ENCODE measurements at regions of chr10 and their contacts with region 1.

Region 1: DNA sequence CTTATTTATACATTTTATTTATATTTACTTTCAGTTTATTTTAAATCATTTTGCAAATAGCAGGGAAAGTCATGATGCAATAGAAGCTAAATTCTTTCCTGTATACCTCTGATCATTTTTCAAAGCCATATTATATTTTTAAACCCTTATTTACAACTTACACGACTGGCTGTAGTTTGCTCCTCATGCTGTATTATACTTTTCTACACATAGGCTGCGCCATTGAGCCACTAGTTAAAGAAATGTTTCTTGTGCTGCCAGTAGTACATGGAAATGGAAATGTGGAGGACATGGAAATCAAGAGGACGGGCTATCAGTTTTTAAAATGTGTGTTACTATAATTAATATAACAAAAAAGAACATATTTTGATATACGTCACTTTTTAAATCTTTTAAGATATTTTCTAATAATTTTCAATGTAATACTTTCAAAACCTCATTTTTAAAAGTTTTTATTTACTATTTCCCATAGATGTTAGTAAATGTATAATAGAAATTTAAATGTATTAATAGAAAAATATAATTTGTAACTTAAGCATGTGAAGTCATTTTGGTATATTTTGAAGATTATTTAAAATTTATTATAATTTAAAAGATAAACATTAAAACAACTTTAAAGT is 118.5 kb downstream of the VTI1A start:
- DNase-seq: no peak
- ATAC-seq: no peak
- H3K4me3 Mint-ChIP-seq: no peak overlapping the region
- H3K27ac Mint-ChIP-seq: no peak overlapping the region
- H3K4me1 Mint-ChIP-seq: peaks cover 1% of the 10 kb centered on the region
- H3K27me3 Mint-ChIP-seq: no peaks in the 10 kb centered on the region
- CTCF ChIP-seq: no peak

Region 2: GRCh38 chr10:112732277-112732921 is 166.9 kb after region 1 on chr10:
- CTCF ChIA-PET with region 1: no interaction called
- POLR2A ChIA-PET with region 1: no interaction called
- intact Hi-C with region 1: no loop called
- DNase-seq: no peak
- ATAC-seq: no peak
- H3K4me3 Mint-ChIP-seq: no peak overlapping the region
- H3K27ac Mint-ChIP-seq: no peak overlapping the region
- H3K4me1 Mint-ChIP-seq: peaks cover 5% of the 10 kb centered on the region
- H3K27me3 Mint-ChIP-seq: no peaks in the 10 kb centered on the region
- CTCF ChIP-seq: no peak

Region 3: DNA sequence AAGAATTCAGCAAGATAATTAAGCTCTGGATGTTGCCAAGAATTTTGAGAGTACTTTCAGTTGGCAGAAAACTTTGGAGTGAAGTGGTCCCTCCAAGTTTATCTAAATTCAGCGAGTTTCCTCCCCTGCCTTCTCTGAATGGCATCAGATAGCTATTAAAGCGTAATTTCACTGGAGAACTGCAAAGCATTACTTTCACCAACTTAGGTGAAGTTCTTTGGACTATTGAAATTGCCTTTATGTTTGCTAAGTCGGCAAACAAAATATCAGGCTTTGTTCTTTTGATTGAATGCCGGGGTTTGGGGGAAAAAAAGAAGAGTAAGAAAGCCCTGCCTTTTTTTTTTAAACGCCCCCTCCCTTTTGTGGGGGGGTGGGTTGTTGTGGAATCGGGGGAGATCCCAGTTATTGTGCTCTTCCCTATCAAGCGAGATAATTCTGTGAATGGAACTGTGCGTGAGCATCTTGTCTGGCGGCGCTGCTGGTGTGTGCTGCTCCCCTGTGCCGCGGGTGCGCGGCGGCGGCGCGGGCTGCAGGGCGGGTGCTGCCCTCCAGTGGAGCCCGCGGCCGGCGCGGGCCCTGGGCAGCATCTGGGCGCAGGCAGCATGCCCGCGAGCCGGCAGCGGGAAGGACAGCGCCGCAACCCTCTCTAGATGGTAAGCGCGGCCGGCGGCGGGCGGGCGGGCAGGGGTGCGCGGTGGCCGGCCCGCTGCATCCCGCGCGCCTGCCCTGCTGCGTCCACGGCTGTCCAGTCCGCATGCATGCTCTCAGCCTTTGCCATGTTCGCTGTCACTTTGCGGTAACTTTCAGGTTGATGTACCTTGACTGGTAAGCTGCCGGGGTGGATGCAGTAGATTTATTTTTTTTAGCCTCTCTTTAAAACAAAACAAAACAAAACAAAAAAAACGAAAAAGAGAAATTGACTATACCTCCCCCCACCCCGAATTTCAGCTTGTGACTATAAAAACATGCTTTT is 561.0 kb after region 1 on chr10:
- CTCF ChIA-PET with region 1: no interaction called
- POLR2A ChIA-PET with region 1: no interaction called
- intact Hi-C with region 1: loop called (anchors 10 kb)
- DNase-seq: peak; percentile 22
- ATAC-seq: peak; percentile 71
- H3K4me3 Mint-ChIP-seq: peak overlapping the region; percentile 25
- H3K27ac Mint-ChIP-seq: no peak overlapping the region
- H3K4me1 Mint-ChIP-seq: peaks cover 3% of the 10 kb centered on the region
- H3K27me3 Mint-ChIP-seq: peaks cover 42% of the 10 kb centered on the region
- CTCF ChIP-seq: no peak

Region 4: GRCh38 chr10:113385021-113385999 is 819.8 kb after region 1 on chr10:
- CTCF ChIA-PET with region 1: no interaction called
- POLR2A ChIA-PET with region 1: no interaction called
- intact Hi-C with region 1: loop called (anchors 5 kb)
- DNase-seq: no peak
- ATAC-seq: peak; percentile 77
- H3K4me3 Mint-ChIP-seq: no peak overlapping the region
- H3K27ac Mint-ChIP-seq: no peak overlapping the region
- H3K4me1 Mint-ChIP-seq: peaks cover 15% of the 10 kb centered on the region
- H3K27me3 Mint-ChIP-seq: peaks cover 22% of the 10 kb centered on the region
- CTCF ChIP-seq: no peak